Activated CD4-positive, alpha-beta T cell treated with anti-CD3 and anti-CD28 coated beads, Interleukin-2, amount 10 ng/mL, durations not matched to agents 24 days and 14 days (primary cell): ENCODE measurements at regions of chr12 and their contacts with region 1.

Region 1: GRCh38 chr12:4807116-4807783 is 87.0 kb downstream of the GALNT8 start:
- DNase-seq: no peak
- H3K4me3 Mint-ChIP-seq: peak overlapping the region; percentile 5
- H3K27ac Mint-ChIP-seq: no peak overlapping the region
- H3K4me1 Mint-ChIP-seq: peaks cover 25% of the 10 kb centered on the region
- H3K27me3 Mint-ChIP-seq: peaks cover 5% of the 10 kb centered on the region

Region 2: DNA sequence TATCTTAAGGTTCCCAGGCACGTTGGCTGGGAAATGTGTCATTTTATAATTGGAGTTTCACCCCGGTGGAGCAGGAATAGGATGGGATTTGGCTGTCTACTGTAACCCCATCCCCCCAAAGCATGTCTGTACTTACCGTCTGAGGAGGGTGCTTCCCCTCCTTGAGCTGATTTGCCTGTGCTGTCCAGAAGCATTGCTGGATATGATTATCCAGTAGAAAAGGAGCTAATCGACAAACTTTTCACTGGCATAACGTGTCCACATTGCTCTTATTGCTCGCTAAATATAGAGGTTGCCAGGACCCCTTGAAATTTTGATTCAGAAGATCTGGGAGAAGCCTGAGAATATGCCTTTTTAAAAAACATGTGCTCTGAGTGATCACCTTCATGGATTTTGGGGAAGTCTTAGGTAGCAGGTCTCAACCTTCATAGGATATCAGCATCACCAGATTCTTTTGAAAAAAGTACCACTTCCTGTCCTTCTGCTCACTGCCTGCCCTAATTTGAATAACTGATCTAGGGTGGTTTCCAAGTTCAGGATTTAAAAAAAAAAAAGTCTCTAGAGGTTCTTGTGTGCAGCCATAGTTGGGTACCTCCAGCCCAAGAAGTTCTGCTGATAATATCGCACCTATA is 22.0 kb after region 1 on chr12:
- intact Hi-C with region 1: loop called (anchors 2 kb)
- DNase-seq: peak; percentile 78
- H3K4me3 Mint-ChIP-seq: peak overlapping the region; percentile 92
- H3K27ac Mint-ChIP-seq: peak overlapping the region; percentile 99
- H3K4me1 Mint-ChIP-seq: peaks cover 65% of the 10 kb centered on the region
- H3K27me3 Mint-ChIP-seq: no peaks in the 10 kb centered on the region